IMR-90 (cell line): ENCODE measurements at regions of chr1 and their contacts with region 1.

Region 1: DNA sequence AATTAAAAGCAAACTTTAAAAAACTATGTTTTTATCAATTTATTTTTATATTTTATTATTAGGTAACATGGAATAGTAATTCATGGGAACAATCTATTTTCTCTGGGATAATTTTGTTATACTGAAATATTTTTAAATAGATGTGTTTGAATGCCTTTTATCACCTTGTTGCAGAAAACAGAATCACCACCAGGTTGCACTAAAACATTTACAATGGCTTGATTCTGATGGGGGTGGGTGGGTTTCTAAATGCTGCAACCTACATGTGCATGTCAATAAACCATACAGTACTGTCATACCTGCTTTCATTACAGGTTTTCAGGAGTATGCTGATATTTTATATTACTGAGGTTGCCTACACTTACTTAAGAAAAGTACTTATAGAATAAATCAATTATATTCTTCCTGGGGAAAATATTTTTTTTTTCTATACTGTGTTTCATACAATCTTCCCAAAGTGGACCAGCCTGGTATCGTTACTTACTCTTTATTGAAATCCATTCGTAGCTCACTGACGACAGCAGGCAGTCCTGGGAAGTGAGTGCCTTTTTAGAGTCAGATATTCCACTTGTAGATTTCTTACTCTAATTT is 132.8 kb downstream of the PTPRC start:
- DNase-seq: peak; percentile 56
- ATAC-seq: no peak; the same call in 1 of the 2 replicates
- H3K4me3 ChIP-seq: no peak overlapping the region
- H3K27ac ChIP-seq: no peak overlapping the region
- H3K4me1 ChIP-seq: peaks cover 3% of the 10 kb centered on the region; the same call in 1 of the 2 replicates
- H3K27me3 ChIP-seq: no peaks in the 10 kb centered on the region
- CTCF ChIP-seq: peak; percentile 64
- POLR2A ChIP-seq: no peak
- RAD21 ChIP-seq: peak; percentile 86

Region 2: GRCh38 chr1:199157494-199157893 is 385.8 kb after region 1 on chr1:
- CTCF ChIA-PET with region 1: no interaction called
- POLR2A ChIA-PET with region 1: no interaction called
- dilution Hi-C with region 1: no loop called
- in situ Hi-C with region 1: no loop called
- intact Hi-C with region 1: no loop called
- DNase-seq: peak; percentile 35
- ATAC-seq: no peak
- H3K4me3 ChIP-seq: no peak overlapping the region
- H3K27ac ChIP-seq: no peak overlapping the region
- H3K4me1 ChIP-seq: no peaks in the 10 kb centered on the region
- H3K27me3 ChIP-seq: no peaks in the 10 kb centered on the region
- CTCF ChIP-seq: no peak
- POLR2A ChIP-seq: no peak
- RAD21 ChIP-seq: no peak

Region 3: GRCh38 chr1:199243423-199244061 is 471.9 kb after region 1 on chr1:
- CTCF ChIA-PET with region 1: no interaction called
- POLR2A ChIA-PET with region 1: no interaction called
- dilution Hi-C with region 1: no loop called
- in situ Hi-C with region 1: no loop called
- intact Hi-C with region 1: loop called (anchors 5 kb)
- DNase-seq: peak; percentile 43
- ATAC-seq: peak; percentile 85
- H3K4me3 ChIP-seq: no peak overlapping the region
- H3K27ac ChIP-seq: no peak overlapping the region
- H3K4me1 ChIP-seq: no peaks in the 10 kb centered on the region
- H3K27me3 ChIP-seq: no peaks in the 10 kb centered on the region
- CTCF ChIP-seq: peak; percentile 64
- POLR2A ChIP-seq: no peak
- RAD21 ChIP-seq: peak; percentile 79

Region 4: GRCh38 chr1:199422198-199422597 is 650.5 kb after region 1 on chr1:
- CTCF ChIA-PET with region 1: no interaction called
- POLR2A ChIA-PET with region 1: no interaction called
- dilution Hi-C with region 1: no loop called
- in situ Hi-C with region 1: no loop called
- intact Hi-C with region 1: loop called (anchors 5 kb)
- DNase-seq: peak; percentile 55
- ATAC-seq: peak; percentile 82
- H3K4me3 ChIP-seq: no peak overlapping the region
- H3K27ac ChIP-seq: no peak overlapping the region
- H3K4me1 ChIP-seq: peaks cover 2% of the 10 kb centered on the region; the same call in 1 of the 2 replicates
- H3K27me3 ChIP-seq: no peaks in the 10 kb centered on the region
- CTCF ChIP-seq: peak; percentile 56
- POLR2A ChIP-seq: no peak
- RAD21 ChIP-seq: peak; percentile 56

Region 5: DNA sequence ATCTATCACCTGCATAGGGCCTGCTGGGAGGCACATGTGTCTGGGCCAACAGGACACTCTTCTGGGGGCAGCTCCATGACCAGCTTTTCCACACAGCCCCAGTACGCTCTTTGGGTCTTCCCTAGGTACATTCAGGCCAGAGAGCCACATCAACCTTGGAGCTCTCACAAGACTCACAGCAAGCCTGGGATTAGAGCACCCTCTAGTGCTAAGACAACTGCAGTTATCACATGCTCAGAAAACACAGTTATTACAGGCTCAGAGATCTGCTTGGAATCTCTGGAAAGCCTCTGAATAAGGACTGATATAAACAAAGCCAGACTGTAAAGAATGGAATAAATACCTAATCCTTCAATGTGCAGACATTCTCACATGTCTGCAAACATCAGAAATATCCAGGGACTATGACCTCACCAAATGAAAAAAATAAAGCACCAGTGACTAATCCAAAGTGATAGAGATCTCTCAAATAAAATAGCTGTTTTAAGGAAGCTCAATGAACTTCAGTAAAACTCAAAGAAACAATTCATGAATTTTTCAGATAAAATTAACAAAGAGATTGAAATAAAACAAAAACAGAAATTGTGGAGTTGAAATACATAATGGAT is 692.0 kb after region 1 on chr1:
- CTCF ChIA-PET with region 1: interaction called, 3 read pairs
- POLR2A ChIA-PET with region 1: no interaction called
- dilution Hi-C with region 1: no loop called
- in situ Hi-C with region 1: loop called (anchors 25 kb)
- intact Hi-C with region 1: loop called (anchors 5 kb)
- DNase-seq: peak; percentile 82
- ATAC-seq: peak; percentile 92
- H3K4me3 ChIP-seq: no peak overlapping the region
- H3K27ac ChIP-seq: no peak overlapping the region
- H3K4me1 ChIP-seq: no peaks in the 10 kb centered on the region; the same call in 1 of the 2 replicates
- H3K27me3 ChIP-seq: no peaks in the 10 kb centered on the region
- CTCF ChIP-seq: peak; percentile 71
- POLR2A ChIP-seq: no peak
- RAD21 ChIP-seq: peak; percentile 89

Region 6: GRCh38 chr1:200510228-200510623 is 1738.6 kb after region 1 on chr1:
- CTCF ChIA-PET with region 1: no interaction called
- POLR2A ChIA-PET with region 1: no interaction called
- dilution Hi-C with region 1: no loop called
- in situ Hi-C with region 1: loop called (anchors 25 kb)
- intact Hi-C with region 1: loop called (anchors 10 kb)
- DNase-seq: peak; percentile 88
- ATAC-seq: peak; percentile 90
- H3K4me3 ChIP-seq: no peak overlapping the region
- H3K27ac ChIP-seq: no peak overlapping the region
- H3K4me1 ChIP-seq: no peaks in the 10 kb centered on the region
- H3K27me3 ChIP-seq: no peaks in the 10 kb centered on the region
- CTCF ChIP-seq: peak; percentile 91
- POLR2A ChIP-seq: peak; percentile 56; the same call in 1 of the 2 replicates
- RAD21 ChIP-seq: peak; percentile 94